Activated naive CD4-positive, alpha-beta T cell treated with anti-CD3 and anti-CD28 coated beads for 36 hours (primary cell): ENCODE measurements at regions of chr7 and their contacts with region 1.

Region 1: DNA sequence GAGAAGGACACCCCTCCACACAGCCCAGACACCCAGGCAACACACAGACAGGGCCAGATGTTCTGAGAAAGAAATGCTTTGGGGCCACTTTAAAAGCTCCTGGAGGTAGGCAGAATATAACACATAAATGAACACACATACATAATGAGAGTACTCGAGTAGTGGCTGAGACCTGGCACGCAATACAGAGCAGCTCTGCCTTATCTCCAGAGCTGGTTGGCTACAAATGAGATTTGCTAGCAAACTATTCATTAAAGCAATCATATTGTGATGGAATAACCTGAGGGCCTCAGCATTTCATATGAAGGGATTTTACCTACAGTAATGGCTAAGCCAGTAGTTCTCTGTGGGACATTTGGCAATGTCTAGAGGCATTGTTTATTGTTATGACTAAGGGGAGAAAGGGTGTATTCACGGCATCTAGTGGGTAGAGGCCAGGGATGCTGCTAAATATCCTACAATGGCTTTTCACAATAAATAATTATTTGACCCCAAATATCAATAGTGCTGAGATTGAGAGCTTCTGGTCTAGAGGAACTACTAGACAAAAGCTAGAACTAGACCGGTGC is 5.5 kb upstream of the IMPDH1 start:
- DNase-seq: no peak
- H3K4me3 Mint-ChIP-seq: no peak overlapping the region
- H3K27ac Mint-ChIP-seq: no peak overlapping the region
- H3K4me1 Mint-ChIP-seq: peaks cover 2% of the 10 kb centered on the region
- H3K27me3 Mint-ChIP-seq: peaks cover 2% of the 10 kb centered on the region

Region 2: DNA sequence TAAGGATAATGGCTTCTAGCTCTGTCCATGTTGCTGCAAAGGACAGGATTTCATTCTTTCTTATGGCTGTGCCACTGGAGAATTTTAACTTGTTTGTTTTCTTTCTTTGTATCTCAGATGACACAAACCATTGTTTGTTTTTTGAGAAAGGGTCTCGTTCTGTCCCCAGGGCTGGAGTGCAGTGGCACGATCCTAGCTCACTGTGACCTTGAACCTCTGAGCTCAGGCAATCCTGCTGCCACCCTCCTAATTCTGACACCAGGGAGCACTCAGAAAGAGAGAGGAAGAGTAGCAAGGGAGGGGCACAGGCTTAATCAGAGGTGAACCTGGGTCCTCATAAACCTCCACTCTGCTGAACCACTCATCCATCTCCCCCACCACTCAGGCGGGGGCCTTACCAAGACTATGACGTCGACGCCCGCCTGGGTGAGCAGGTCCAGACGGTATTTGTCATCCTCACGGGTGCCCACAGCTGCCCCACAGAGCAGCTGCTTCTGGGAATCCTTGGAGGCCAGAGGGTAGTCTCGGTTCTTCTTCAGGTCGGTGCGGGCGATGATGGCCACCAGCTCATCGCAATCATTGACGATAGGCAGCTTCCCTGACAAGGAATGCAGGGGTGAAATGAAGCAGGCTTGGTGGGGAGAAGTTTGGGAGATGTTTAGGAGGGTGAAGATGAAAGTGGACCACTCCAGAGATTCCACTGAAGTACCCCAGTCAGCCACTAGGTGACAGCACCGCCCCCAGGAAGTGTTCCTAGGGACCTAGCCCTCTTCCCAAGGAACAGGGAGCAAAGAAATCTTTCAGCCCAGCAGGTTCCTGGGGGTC is 17.1 kb before region 1 on chr7:
- CTCF ChIA-PET with region 1: interaction called, 34 read pairs
- intact Hi-C with region 1: no loop called
- DNase-seq: peak; percentile 65
- H3K4me3 Mint-ChIP-seq: no peak overlapping the region
- H3K27ac Mint-ChIP-seq: no peak overlapping the region
- H3K4me1 Mint-ChIP-seq: peaks cover 7% of the 10 kb centered on the region
- H3K27me3 Mint-ChIP-seq: no peaks in the 10 kb centered on the region